Right cardiac atrium (tissue), 5 donors: ENCODE measurements at regions of chr2 and their contacts with region 1.

Region 1: DNA sequence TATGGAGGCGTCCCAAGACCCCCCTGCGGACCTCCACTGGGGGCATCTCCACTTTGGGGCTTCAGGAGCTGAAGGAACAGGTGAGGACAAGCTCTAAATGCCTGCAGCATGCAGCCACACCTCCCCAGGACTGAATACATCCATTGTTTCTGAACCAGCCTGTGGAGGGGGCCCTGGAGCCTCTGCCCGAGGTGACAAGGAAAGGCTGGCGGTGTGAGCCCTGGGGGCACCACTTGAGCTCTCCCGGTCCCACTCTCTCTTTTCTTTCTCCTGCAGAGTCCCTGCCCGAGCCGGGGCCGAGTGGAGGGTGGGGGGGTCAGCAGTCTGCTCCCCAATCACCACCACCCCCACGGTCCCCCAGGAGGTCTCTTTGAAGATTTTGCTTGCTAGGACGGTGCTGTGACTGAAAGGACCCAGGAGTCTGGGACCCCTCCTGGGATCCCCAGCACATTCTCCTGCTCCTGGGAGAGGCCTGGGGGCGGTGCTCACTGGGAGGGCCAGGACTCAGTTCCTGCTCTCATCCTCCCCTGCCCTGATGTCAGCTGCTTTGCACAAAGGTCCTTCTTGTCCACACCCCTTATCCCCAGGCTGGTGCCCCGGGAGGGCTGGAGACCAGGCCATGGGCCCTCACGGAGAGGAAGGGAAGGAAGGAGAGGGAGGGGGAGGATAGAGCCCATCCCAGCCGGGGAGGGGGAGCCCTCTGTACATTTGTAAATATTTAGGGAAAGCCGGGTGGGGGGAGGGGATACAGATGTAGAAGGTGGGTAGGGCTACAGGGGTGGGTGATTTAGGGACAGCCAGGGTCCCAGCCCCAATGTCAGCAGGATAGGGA is 5.7 kb downstream of the CHPF start:
- DNase-seq: no peak
- ATAC-seq: no peak
- H3K4me3 ChIP-seq: no peak overlapping the region
- H3K27ac ChIP-seq: no peak overlapping the region
- H3K4me1 ChIP-seq: no peaks in the 10 kb centered on the region
- H3K27me3 ChIP-seq: no peaks in the 10 kb centered on the region

Region 2: GRCh38 chr2:219218732-219219701 is 318.9 kb before region 1 on chr2 and contains the start of gene ABCB6:
- intact Hi-C with region 1: no loop called
- DNase-seq: peak; percentile 99 to 100 (median 99)
- ATAC-seq: peak; percentile 91
- H3K4me3 ChIP-seq: peak within 1 kb of the TSS; percentile 11
- H3K27ac ChIP-seq: peak within 1 kb of the TSS; percentile 79
- H3K4me1 ChIP-seq: peaks cover 6% of the 10 kb centered on the region
- H3K27me3 ChIP-seq: no peaks in the 10 kb centered on the region
- total RNA-seq, gene ABCB6: 19.4 to 30.5 (median 23.5) TPM

Region 3: GRCh38 chr2:219490186-219490585 is 47.7 kb before region 1 on chr2:
- intact Hi-C with region 1: loop called in 1 of 4 experiments (anchors 5 kb)
- DNase-seq: peak in 1 of 3 donors; percentile 58
- ATAC-seq: no peak
- H3K4me3 ChIP-seq: no peak overlapping the region
- H3K27ac ChIP-seq: no peak overlapping the region
- H3K4me1 ChIP-seq: no peaks in the 10 kb centered on the region
- H3K27me3 ChIP-seq: no peaks in the 10 kb centered on the region

Region 4: DNA sequence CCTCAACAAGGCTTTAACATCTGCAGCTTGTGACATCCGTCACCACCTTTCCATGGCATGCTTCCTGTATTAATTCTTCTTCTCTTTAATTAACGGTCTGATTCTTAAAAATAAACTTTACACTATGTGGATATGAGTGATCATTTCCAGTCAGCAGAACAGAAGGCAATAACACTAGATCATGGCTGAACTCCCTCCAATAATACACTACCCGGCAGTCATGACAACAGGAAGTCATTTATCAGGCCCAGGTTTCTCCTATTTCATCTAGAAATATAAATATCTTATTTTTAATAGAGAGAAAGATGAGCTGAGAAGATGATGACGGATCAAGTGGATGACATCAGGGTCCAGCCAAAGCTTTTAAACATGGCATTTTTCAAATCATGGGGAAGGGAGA is 881.8 kb after region 1 on chr2:
- intact Hi-C with region 1: no loop called
- DNase-seq: no peak
- ATAC-seq: no peak
- H3K4me3 ChIP-seq: no peak overlapping the region
- H3K27ac ChIP-seq: no peak overlapping the region
- H3K4me1 ChIP-seq: no peaks in the 10 kb centered on the region
- H3K27me3 ChIP-seq: no peaks in the 10 kb centered on the region